Activated CD4-positive, alpha-beta memory T cell treated with anti-CD3 and anti-CD28 coated beads for 36 hours (primary cell): ENCODE measurements at regions of chr6 and their contacts with region 1.

Region 1: DNA sequence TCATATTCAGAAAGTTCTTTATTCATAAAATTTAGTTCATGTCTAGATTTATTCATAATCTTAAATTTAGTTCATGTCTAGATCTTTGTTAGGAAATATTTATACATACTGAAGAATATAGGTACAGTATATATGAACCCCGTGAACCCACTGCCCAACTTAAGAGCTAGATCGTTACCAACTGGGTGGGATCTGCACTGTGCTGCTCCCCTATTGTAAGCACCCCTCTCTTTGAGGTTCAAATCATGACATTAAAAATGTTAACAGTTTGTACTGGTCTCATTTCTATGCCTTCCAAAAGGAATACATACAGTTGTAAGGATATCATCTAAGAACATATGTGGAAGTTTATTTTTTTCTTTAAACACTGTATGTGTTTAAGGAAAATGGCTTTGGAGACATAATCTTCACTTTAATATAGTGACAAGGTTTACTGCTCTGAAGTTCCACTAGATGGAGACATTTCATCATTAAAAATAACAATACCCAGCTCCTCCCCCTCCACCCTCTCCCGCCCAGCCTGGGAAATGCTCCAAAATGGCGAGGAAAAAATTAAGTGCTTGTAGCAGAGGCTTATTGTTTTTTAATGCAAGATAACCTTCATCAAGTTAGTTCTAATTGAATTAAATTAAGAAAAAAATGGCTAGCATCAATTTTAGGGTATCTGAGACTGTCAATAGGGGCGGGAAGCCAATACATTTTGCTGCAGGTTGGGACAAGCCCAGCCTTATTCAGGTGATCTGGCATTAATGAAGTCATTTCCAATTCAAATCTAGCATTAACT is 104.1 kb upstream of the TRAF3IP2 start:
- DNase-seq: peak; percentile 68
- H3K4me3 Mint-ChIP-seq: no peak overlapping the region
- H3K27ac Mint-ChIP-seq: peak overlapping the region; percentile 74
- H3K4me1 Mint-ChIP-seq: peaks cover 53% of the 10 kb centered on the region
- H3K27me3 Mint-ChIP-seq: no peaks in the 10 kb centered on the region

Region 2: DNA sequence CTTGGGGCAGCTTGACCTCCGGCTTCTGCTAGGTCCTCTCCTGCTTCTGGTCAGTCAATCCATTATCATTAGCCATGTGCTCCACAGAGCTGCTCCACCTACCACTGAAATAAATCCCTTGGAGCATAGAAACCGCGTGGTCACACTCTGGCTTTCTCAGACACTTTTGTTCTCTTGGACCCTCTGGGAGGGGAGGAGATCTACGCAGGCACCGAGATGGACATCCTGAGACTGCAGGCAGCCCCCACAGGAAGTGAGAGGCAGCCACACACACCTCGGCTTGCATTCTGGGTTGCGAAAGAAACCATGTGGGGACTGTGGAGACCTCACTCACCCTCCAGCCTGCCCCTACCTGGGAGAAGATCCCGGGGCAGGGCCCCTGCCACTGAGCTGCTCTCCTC is 83.9 kb after region 1 on chr6:
- CTCF ChIA-PET with region 1: interaction called, 6 read pairs
- POLR2A ChIA-PET with region 1: no interaction called
- intact Hi-C with region 1: loop called (anchors 2 kb)
- DNase-seq: peak; percentile 75
- H3K4me3 Mint-ChIP-seq: peak overlapping the region; percentile 78
- H3K27ac Mint-ChIP-seq: peak overlapping the region; percentile 93
- H3K4me1 Mint-ChIP-seq: peaks cover 77% of the 10 kb centered on the region
- H3K27me3 Mint-ChIP-seq: no peaks in the 10 kb centered on the region

Region 3: GRCh38 chr6:111823831-111824607 is 114.2 kb after region 1 on chr6:
- CTCF ChIA-PET with region 1: interaction called, 17 read pairs
- POLR2A ChIA-PET with region 1: no interaction called
- intact Hi-C with region 1: no loop called
- DNase-seq: peak; percentile 44
- H3K4me3 Mint-ChIP-seq: peak overlapping the region; percentile 21
- H3K27ac Mint-ChIP-seq: peak overlapping the region; percentile 91
- H3K4me1 Mint-ChIP-seq: peaks cover 80% of the 10 kb centered on the region
- H3K27me3 Mint-ChIP-seq: no peaks in the 10 kb centered on the region

Region 4: DNA sequence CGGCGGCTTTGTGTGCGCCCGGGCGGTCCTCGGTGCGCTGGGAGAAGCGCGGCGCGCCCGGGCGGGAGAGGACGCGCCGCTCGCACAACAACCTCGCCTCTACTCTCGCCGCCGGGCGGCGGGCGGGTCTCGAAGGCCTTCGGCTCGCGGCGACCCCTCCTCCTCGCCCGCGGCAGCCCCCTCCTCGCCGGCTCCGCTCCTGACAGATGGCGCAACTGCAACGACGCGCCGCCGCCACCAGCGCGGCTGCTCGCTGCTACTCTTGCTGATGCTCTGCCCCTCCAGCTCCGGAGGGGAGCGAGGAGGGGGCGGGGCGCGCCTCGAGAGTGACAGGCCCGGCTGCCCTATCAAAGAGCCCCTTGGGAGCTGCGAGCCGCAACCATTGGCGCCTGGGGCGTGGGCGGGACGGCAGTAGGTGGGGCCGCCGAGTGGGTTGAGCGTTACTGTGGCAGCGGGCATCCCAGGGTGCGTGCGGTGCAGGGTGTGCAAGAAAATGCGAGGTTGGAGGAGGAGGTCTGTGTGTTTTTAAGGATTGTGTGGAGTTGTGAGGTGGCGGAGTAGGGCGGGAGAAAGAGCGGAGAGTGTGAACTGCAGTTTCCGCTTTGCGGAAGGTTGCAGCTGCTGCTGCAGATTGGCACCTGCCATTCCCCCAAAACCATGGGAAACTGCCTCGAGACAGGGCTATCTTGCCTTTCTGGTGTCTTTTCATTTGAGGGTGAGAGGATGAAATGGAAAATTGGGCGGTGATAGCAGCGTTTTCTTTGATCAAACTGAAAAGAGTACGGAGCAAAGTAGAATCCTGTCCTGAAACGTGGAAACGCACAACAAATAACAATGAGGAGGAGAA is 163.6 kb after region 1 on chr6 and contains the start of gene FYN:
- CTCF ChIA-PET with region 1: interaction called, 5 read pairs
- POLR2A ChIA-PET with region 1: interaction called, 3 read pairs
- intact Hi-C with region 1: loop called (anchors 2 kb)
- DNase-seq: peak; percentile 99
- H3K4me3 Mint-ChIP-seq: peak within 1 kb of the TSS; percentile 98
- H3K27ac Mint-ChIP-seq: peak within 1 kb of the TSS; percentile 96
- H3K4me1 Mint-ChIP-seq: peaks cover 30% of the 10 kb centered on the region
- H3K27me3 Mint-ChIP-seq: no peaks in the 10 kb centered on the region
- total RNA-seq, gene FYN: 353 to 365 TPM

Region 5: DNA sequence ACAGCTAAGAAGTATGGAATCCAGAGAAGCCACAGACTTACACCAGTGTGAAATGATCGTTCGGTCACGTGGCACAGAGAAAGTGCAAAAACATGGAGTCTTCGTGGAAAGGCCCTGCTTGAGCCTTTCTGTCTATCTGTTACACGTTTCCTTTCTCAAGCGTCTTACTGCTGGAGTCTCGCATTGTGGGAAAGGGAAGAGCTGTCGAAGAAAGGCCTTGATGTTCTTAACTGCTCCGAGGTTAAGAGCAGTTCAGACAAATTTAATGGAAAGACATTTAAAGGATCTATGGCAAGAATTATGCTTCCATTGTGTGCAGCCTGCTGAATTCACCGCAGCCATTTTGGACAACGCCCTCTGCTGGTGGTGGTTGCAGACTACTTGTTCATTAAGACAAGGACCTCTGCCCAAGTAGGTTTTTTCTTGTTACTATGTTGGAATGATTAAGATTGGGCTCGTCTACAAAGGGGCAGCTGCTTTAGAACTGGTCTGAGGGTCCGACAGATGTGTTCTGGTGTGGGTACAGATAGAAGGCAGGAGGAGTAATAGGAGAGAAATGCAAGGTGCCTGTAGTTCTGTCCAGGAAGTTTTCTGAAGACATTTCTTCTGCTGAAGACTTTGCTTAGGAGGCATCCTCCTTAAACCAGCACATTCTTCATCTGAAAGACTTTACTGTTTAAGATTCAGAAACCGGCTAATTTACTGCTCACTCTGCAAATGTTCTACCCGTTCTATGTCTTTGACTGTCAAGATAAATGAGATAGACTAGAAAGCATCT is 319.4 kb after region 1 on chr6:
- CTCF ChIA-PET with region 1: interaction called, 22 read pairs
- POLR2A ChIA-PET with region 1: no interaction called
- intact Hi-C with region 1: loop called (anchors 1 kb)
- DNase-seq: peak; percentile 86
- H3K4me3 Mint-ChIP-seq: no peak overlapping the region
- H3K27ac Mint-ChIP-seq: peak overlapping the region; percentile 89
- H3K4me1 Mint-ChIP-seq: peaks cover 70% of the 10 kb centered on the region
- H3K27me3 Mint-ChIP-seq: no peaks in the 10 kb centered on the region

Region 6: GRCh38 chr6:112163295-112164257 is 453.8 kb after region 1 on chr6:
- CTCF ChIA-PET with region 1: interaction called, 16 read pairs
- POLR2A ChIA-PET with region 1: no interaction called
- intact Hi-C with region 1: no loop called
- DNase-seq: peak; percentile 88
- H3K4me3 Mint-ChIP-seq: peak overlapping the region; percentile 36
- H3K27ac Mint-ChIP-seq: no peak overlapping the region
- H3K4me1 Mint-ChIP-seq: peaks cover 16% of the 10 kb centered on the region
- H3K27me3 Mint-ChIP-seq: peaks cover 43% of the 10 kb centered on the region